Caco-2 (cell line): ENCODE measurements at regions of chr3 and their contacts with region 1.

Region 1: DNA sequence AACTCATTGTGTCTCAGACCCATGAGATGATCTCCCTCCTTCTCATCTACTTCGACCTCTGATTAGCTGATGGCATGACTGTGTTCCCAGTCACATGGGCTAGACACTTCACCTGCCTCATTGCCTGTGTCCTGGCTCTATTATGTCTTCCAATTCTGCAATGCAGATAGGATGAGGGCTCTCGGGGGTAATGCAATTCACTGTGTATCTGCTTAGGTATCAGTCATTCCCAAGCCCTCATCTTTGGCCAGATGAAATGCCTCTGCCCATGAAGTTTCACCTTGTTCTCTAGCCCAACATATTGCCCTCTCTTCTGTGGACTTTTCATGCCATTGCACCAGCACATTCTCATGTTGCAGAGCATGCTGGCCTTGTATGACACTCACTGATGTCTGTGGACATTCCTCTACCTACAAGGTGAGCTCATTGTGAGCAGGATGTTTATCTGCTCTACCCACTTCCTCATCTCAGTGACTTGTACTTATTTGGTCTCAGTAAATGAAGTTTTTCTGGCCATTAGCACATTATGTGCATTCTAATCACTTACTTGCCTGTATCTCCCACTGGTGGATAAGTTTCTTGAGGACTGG is 32.3 kb downstream of the MOBP start:
- DNase-seq: no peak
- H3K4me3 ChIP-seq: no peak overlapping the region
- H3K4me3 Mint-ChIP-seq: no peak overlapping the region
- H3K27ac Mint-ChIP-seq: no peak overlapping the region
- H3K4me1 ChIP-seq: no peaks in the 10 kb centered on the region; the same call in 1 of the 2 replicates
- H3K4me1 Mint-ChIP-seq: no peaks in the 10 kb centered on the region
- H3K27me3 ChIP-seq: no peaks in the 10 kb centered on the region
- H3K27me3 Mint-ChIP-seq: peaks cover 14% of the 10 kb centered on the region
- CTCF ChIP-seq: no peak

Region 2: DNA sequence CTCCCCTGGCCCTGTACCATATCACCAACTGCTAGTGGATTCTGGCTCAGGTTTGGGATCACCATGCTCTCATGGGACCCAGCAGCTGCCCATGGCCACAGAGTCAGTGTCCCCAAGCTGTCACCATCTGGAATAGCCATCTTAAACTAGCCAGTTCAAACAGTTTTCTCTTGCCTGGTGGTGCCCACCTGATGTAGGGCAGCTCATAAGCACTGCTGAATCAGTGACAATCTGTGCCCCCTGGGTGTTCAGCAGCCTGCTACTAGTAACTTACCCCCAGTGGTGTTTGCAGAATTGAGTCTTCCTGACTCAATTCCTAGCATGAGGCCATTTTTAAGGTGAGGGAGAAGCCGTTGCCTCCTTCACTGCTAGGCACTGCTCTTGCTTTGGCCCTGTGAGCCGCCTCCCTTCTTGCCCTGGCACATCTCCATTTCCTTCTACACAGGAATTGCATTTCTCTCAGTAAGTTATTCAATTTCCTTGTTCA is 85.3 kb before region 1 on chr3:
- CTCF ChIA-PET with region 1: no interaction called
- POLR2A ChIA-PET with region 1: no interaction called
- intact Hi-C with region 1: loop called (anchors 1 kb)
- DNase-seq: no peak
- H3K4me3 ChIP-seq: no peak overlapping the region
- H3K4me3 Mint-ChIP-seq: no peak overlapping the region
- H3K27ac Mint-ChIP-seq: peak overlapping the region; percentile 39
- H3K4me1 ChIP-seq: peaks cover 6% of the 10 kb centered on the region; the same call in 1 of the 2 replicates
- H3K4me1 Mint-ChIP-seq: peaks cover 17% of the 10 kb centered on the region
- H3K27me3 ChIP-seq: no peaks in the 10 kb centered on the region
- H3K27me3 Mint-ChIP-seq: no peaks in the 10 kb centered on the region
- CTCF ChIP-seq: no peak

Region 3: DNA sequence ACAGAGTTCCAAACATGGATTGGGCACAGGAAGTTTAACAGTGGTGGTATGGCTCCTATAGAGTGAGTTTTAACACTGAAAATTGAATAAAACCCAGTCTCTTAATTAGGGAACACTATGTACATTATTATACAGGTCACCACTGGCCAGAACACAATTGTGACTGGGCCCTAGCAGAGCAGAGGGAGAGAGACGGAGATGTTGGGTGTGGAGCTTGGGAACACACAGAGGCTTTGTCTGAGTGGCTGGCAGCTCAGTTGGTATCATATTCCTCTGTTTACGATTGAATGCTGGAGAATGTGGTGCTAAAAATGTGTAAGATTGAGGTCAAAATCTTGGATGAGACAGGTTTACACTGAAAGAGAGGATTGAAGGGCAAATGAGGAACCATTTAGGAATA is 39.1 kb before region 1 on chr3:
- CTCF ChIA-PET with region 1: no interaction called
- POLR2A ChIA-PET with region 1: no interaction called
- intact Hi-C with region 1: no loop called
- DNase-seq: no peak
- H3K4me3 ChIP-seq: no peak overlapping the region
- H3K4me3 Mint-ChIP-seq: no peak overlapping the region
- H3K27ac Mint-ChIP-seq: no peak overlapping the region
- H3K4me1 ChIP-seq: peaks cover 8% of the 10 kb centered on the region; the same call in 1 of the 2 replicates
- H3K4me1 Mint-ChIP-seq: no peaks in the 10 kb centered on the region
- H3K27me3 ChIP-seq: no peaks in the 10 kb centered on the region
- H3K27me3 Mint-ChIP-seq: peaks cover 11% of the 10 kb centered on the region
- CTCF ChIP-seq: no peak